Head of caudate nucleus (tissue), 42 donors: ENCODE measurements at regions of chr11 and their contacts with region 1.

Region 1: GRCh38 chr11:16945671-16946469 is 68.3 kb downstream of the PLEKHA7 start:
- DNase-seq: peak; percentile 58 to 91 (median 81)

Region 2: GRCh38 chr11:17014838-17015626 is 69.2 kb after region 1 on chr11:
- intact Hi-C with region 1: loop called (anchors 10 kb)
- DNase-seq: peak in 8 of 42 donors; percentile 16 to 50 (median 34)

Region 3: DNA sequence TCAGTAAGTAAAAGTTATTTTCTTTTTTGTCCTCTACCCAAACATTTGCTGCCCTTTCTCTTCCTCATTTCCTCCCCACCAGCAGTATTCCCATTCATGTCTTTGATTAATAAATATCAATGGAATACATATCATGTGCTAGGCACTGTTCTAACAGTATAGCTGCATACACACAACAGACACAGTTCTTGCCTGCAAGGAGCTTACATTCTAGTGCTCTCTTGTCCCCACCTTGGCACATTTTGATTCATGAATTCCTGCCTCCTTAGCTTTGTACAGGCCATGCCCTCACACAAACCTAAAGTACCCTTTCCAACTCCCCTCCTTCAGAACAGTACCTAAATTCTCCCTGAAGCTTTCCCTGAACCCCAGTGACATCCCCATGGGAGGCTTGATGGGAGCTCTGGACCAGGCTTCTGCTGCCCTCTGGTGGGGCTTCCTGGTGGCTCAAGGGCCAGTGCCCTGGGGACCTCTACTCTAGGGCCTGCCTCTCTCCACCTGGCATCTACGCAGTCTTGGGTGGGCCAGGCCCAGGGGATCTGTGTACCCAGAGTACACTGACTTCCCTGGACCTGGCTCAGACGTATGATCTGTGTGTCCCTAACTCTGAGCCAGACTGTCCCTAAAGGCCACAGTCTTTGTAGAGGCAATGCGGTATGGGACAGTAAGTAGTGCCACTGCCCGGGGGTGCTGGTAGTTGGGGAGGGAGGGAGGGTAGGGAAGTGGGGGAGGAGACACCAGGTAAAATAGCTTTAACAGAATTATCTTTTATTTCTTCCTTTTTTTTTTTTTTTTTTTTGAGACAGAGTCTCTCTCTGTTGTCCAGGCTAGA is 117.5 kb after region 1 on chr11:
- intact Hi-C with region 1: loop called (anchors 5 kb)
- DNase-seq: peak; percentile 48 to 88 (median 74)

Region 4: DNA sequence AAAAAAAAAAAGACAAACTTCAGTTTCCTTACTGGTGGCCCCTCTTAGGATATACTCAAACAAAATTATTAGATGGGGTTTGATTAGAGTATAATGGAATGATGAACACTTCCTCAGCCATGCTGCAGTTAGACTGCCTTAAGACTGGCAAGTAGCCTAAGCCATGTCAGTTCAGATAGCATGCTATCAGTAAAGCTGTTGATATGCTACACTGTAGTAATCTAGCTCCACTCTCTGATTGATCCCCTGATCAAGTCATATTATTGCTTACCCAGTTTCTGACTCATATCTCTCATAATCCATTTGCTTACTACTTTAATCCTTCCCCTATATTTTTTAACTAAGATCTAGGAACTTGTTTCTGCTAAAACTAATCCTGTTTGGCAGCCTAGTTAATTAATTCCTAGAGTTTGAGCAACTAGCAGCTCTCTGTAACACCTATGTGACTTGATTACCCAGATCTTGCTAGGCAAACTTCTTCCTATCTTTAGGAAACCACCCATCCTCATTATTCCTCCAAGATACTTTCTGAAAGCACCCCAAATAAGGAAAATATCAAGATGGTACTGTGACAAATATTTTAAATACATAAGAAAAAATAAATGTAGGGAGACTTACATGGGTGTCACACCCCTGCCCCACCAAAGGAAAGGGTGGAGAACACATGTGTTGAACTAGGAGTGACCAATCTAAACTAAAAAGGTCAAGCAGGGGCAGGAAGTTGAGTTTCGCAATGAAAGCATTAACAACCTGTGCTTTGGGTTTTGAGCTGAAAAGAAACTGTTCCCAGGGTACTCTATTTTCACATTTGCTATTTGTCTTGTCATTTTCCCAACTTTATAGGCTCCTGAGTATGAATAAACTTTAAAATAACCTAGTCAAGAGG is 218.7 kb after region 1 on chr11:
- intact Hi-C with region 1: no loop called
- DNase-seq: no peak